Astrocyte of the cerebellum (primary cell): ENCODE measurements at regions of chr12 and their contacts with region 1.

Region 1: GRCh38 chr12:101051901-101052550 is 158.0 kb downstream of the SLC5A8 start:
- DNase-seq: peak; percentile 90
- H3K4me3 ChIP-seq: no peak overlapping the region
- CTCF ChIP-seq: no peak

Region 2: DNA sequence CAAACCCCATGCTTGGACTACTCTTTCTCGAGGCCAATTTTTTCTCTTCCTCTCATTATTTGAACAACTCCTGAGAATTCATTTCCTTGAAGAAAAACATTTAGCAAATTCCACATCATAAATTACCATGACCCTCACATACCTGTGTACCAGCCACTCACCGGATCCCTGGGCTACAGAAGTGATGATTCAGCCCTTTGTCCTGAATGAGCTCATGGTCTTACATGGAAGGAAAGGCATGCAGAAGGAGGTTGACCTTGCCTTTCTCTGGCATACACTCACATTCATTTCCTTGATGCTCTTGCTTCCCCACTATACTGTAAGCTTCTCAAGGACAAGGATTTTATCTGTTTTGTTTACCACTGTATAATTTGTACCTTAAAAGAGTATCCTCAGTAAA is 33.5 kb before region 1 on chr12:
- in situ Hi-C with region 1: loop called (anchors 5 kb)
- DNase-seq: peak; percentile 96
- H3K4me3 ChIP-seq: no peak overlapping the region
- CTCF ChIP-seq: no peak